ENCODE measurements at regions of chr22 and their contacts with region 1.

Region 1: GRCh38 chr22:19508024-19508776 is 16.0 kb downstream of the CLDN5 start:
- DNase-seq: no peak
- H3K4me3 ChIP-seq: no peak overlapping the region
- H3K27ac ChIP-seq: no peak overlapping the region
- H3K4me1 ChIP-seq: no peaks in the 10 kb centered on the region
- H3K27me3 ChIP-seq: no peaks in the 10 kb centered on the region
- CTCF ChIP-seq: no peak

Region 2: GRCh38 chr22:19488285-19488684 is 19.9 kb before region 1 on chr22:
- CTCF ChIA-PET with region 1: no interaction called
- POLR2A ChIA-PET with region 1: interaction called, 17 read pairs
- intact Hi-C with region 1: no loop called
- DNase-seq: no peak
- H3K4me3 ChIP-seq: no peak overlapping the region
- H3K27ac ChIP-seq: no peak overlapping the region
- H3K4me1 ChIP-seq: no peaks in the 10 kb centered on the region
- H3K27me3 ChIP-seq: no peaks in the 10 kb centered on the region
- CTCF ChIP-seq: no peak

Region 3: DNA sequence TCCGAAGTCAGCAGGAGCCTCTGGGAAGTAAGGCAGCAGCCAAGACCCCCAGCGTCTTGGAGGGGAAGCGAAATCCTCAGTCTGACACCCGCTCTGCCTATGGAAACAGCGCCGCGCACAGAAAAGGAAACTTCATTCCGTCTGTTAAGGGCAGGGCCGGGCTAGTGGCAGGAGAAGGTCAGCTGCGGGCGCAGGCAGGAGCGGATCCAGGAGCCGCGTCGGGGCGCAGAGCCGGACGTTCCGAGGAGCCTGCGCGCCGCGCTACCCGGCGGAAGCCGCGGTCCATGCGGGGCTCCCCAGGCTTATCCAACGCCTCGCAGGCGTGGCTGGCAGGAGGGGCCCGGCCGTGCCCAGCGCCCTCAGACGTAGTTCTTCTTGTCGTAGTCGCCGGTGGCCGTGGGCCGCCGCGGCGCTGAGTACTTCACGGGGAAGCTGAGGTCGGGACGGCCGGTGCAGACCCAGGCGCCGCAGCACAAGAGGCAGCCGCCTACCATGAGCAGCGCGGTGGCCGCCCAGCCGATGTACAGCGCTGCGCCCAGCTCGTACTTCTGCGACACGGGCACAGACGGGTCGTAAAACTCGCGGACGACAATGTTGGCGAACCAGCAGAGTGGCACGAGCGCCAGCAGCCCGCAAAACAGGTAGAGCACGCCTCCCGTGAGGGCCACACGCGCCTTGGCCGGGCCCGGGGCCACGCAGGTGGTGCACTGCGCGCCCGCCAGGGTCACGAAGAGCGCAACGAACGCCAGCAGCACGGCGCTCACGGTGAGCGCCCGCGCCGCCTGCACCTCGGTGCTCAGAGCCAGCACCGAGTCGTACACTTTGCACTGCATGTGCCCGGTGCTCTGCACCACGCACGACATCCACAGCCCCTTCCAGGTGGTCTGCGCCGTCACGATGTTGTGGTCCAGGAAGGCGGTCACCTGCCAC is 15.3 kb after region 1 on chr22:
- CTCF ChIA-PET with region 1: no interaction called
- POLR2A ChIA-PET with region 1: no interaction called
- intact Hi-C with region 1: no loop called
- DNase-seq: peak; percentile 34
- H3K4me3 ChIP-seq: peak overlapping the region; percentile 47
- H3K27ac ChIP-seq: no peak overlapping the region
- H3K4me1 ChIP-seq: peaks cover 5% of the 10 kb centered on the region
- H3K27me3 ChIP-seq: peaks cover 9% of the 10 kb centered on the region
- CTCF ChIP-seq: no peak

Region 4: DNA sequence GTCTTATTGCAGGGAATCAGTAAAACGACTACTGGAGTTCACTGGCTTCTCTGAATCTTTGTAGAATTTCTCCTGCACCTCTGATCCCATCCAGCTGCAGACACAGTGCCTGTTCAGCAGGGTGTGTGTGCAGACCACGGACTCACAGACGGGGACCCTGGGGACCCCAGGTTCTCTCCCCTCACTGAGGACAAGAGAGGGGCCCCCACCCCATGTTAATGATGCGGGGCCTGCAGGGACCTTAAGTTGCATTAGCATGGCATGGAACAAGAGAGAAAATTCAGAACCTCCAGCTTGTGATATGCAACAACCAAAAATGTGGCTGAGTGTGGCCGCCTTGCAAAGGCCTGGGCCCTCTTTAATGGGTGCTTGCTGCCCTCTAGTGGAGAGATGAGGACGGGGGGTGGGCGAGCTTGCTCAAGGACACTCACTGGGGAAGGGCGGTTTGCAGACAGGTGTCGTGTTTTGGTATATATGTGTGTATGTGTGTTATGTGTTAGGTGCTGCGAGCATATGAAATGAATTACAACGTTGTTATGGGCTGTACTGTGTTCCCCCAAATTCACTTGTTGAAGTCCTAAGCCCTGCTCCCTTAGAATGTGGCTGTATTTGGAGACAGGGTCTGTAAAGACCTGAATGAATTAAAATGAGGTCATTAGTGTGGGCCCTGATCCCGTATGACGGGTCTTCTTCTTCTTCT is 121.7 kb after region 1 on chr22:
- CTCF ChIA-PET with region 1: no interaction called
- POLR2A ChIA-PET with region 1: no interaction called
- intact Hi-C with region 1: no loop called
- DNase-seq: peak; percentile 86
- H3K4me3 ChIP-seq: no peak overlapping the region
- H3K27ac ChIP-seq: no peak overlapping the region
- H3K4me1 ChIP-seq: no peaks in the 10 kb centered on the region
- H3K27me3 ChIP-seq: no peaks in the 10 kb centered on the region
- CTCF ChIP-seq: peak; percentile 98